HepG2 (cell line): ENCODE measurements at regions of chrX and their contacts with region 1.

Region 1: DNA sequence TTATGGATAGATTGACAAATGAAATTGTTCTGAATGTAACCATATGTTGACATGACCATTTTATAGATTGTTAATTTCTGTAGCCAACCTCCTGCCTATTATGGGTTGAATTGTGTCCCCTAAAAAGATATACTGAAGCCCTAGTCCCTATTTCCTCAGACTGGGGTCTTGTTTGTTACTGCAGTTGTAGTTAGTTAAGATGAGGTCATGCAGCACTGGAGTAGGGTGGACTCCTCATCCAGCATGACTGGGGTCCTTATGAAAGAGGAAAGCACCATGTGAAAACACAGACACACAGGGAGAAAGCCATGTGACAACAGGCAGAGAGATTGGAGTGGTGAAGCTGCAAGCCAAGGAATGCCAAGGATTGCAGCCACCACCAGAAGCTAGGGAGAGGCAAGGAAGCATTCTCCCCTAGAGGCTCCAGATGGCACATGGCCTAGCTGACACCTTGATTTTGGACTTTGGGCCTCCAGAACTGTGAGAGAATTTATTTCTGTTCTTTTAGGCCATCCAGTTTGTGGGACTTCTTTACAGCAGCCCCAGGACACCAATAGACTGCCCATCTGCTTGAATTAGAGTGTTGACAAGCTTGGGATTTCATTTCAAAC is 14.0 kb downstream of the MTM1 start:
- DNase-seq: no peak
- ATAC-seq: peak; percentile 75
- H3K4me3 ChIP-seq: no peak overlapping the region
- H3K27ac ChIP-seq: peak overlapping the region; percentile 51
- H3K4me1 ChIP-seq: peaks cover 41% of the 10 kb centered on the region
- H3K27me3 ChIP-seq: no peaks in the 10 kb centered on the region
- CTCF ChIP-seq: no peak
- EP300 ChIP-seq: no peak
- POLR2A ChIP-seq: no peak
- RAD21 ChIP-seq: no peak

Region 2: DNA sequence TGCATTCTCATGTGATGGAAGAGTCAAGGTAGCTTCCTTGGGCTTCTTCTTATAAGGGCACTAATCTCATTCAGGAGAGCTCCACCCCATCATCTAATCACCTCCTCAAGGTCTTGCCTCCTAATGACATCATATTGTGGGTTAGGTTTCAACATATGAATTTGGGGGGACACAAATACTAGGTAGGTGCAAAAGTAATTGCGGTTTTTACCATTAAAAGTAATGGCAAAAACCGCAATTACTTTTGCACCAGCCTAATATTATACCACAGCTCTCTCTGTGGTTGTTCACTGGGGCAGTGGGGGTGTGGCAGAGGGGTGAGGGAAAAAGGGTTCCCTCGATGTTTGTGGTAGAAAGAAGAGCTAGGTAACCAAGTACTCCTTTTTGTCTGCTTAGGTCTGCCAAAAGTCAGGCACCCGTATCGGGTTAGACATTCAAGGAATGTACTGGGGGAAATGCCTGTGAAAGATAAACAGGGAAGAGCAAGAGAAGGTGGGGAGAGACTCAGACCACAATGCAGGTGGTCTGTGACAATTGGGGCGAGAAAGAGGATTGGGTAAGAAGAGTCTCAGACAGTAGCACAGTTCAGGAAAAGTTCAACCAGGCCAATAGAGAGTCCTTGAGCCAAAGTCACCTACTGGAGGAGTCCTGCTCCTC is 93.0 kb before region 1 on chrX:
- CTCF ChIA-PET with region 1: no interaction called
- POLR2A ChIA-PET with region 1: no interaction called
- in situ Hi-C with region 1: no loop called
- intact Hi-C with region 1: no loop called
- DNase-seq: no peak
- ATAC-seq: no peak
- H3K4me3 ChIP-seq: no peak overlapping the region
- H3K27ac ChIP-seq: no peak overlapping the region
- H3K4me1 ChIP-seq: no peaks in the 10 kb centered on the region
- H3K27me3 ChIP-seq: no peaks in the 10 kb centered on the region
- CTCF ChIP-seq: no peak
- EP300 ChIP-seq: no peak
- POLR2A ChIP-seq: no peak
- RAD21 ChIP-seq: no peak

Region 3: GRCh38 chrX:150568320-150569154 is 13.9 kb before region 1 on chrX and contains the start of gene MTM1:
- CTCF ChIA-PET with region 1: no interaction called
- POLR2A ChIA-PET with region 1: interaction called, 5 read pairs
- in situ Hi-C with region 1: no loop called
- intact Hi-C with region 1: loop called (anchors 1 kb)
- DNase-seq: peak; percentile 91
- ATAC-seq: peak; percentile 78
- H3K4me3 ChIP-seq: peak within 1 kb of the TSS; percentile 76 to 93 (median 77)
- H3K27ac ChIP-seq: peak within 1 kb of the TSS; percentile 89
- H3K4me1 ChIP-seq: peaks cover 45% of the 10 kb centered on the region
- H3K27me3 ChIP-seq: no peaks in the 10 kb centered on the region; a peak in 1 of 5 replicates
- CTCF ChIP-seq: no peak
- EP300 ChIP-seq: no peak
- POLR2A ChIP-seq: peak; percentile 48 to 59; a peak in 3 of 4 replicates
- RAD21 ChIP-seq: no peak
- total RNA-seq, gene MTM1: 15.2 and 27.2 TPM in 2 replicates